Sigmoid colon (tissue), 7 donors: ENCODE measurements at regions of chr19 and their contacts with region 1.

Region 1: DNA sequence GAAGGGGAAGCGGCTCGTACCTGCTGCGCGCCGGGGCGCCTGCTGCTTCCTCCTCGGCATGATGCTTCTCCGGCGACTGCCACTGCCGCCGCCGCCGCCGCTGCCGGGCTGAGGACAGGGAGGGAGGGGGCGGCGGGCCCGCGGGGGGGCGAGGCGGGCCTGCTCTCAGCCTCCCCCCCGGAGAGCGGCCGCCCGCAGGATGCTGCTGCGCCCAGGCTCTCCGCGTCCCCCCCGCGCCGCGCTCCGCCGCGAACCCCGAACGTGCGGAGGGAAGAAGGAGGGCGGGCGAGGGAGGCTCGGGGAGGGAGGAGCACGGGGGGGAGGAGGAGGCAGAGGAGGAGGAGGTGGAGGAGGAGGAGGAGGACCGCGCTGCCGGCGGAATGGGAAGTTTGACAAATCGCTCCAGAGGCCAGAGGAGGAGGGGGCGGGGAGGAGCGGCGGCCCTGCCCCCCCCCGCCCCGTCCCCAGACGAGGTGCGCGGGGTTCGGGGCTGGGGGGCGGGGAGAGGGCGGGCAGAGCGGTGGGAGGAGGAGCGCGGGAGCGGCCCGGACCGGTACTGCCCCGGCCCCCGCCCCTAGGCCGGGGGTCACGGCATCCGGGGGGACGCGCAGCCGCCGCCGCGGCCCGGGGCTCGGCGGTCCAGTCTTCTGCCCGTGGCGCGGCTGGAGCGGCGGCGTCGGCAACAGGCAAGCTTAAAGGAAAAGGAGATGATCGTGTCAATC is at the start of gene TSHZ3:
- DNase-seq: peak; percentile 94
- H3K4me3 ChIP-seq: peak within 1 kb of the TSS; percentile 73 to 98 (median 97)
- H3K27ac ChIP-seq: peak within 1 kb of the TSS; percentile 95 to 99 (median 99)
- H3K4me1 ChIP-seq: peaks cover 0 to 52% (median 50%) of the 10 kb centered on the region in 4 donors
- H3K27me3 ChIP-seq: no peaks in the 10 kb centered on the region
- CTCF ChIP-seq: no peak
- EP300 ChIP-seq: no peak
- POLR2A ChIP-seq: no peak
- total RNA-seq, gene TSHZ3: 16.1 to 27.7 (median 21.2) TPM

Region 2: GRCh38 chr19:31099515-31100205 is 249.7 kb before region 1 on chr19:
- intact Hi-C with region 1: loop called (anchors 10 kb)
- DNase-seq: no peak
- H3K4me3 ChIP-seq: no peak overlapping the region
- H3K27ac ChIP-seq: no peak overlapping the region
- H3K4me1 ChIP-seq: peaks cover 0 to 50% (median 37%) of the 10 kb centered on the region in 4 donors
- H3K27me3 ChIP-seq: no peaks in the 10 kb centered on the region
- CTCF ChIP-seq: no peak
- EP300 ChIP-seq: no peak
- POLR2A ChIP-seq: no peak

Region 3: GRCh38 chr19:31262725-31263191 is 86.6 kb before region 1 on chr19:
- intact Hi-C with region 1: loop called (anchors 5 kb)
- DNase-seq: no peak
- H3K4me3 ChIP-seq: no peak overlapping the region
- H3K27ac ChIP-seq: no peak overlapping the region
- H3K4me1 ChIP-seq: peaks cover 0 to 31% (median 30%) of the 10 kb centered on the region in 4 donors
- H3K27me3 ChIP-seq: no peaks in the 10 kb centered on the region
- CTCF ChIP-seq: no peak
- EP300 ChIP-seq: no peak
- POLR2A ChIP-seq: no peak

Region 4: DNA sequence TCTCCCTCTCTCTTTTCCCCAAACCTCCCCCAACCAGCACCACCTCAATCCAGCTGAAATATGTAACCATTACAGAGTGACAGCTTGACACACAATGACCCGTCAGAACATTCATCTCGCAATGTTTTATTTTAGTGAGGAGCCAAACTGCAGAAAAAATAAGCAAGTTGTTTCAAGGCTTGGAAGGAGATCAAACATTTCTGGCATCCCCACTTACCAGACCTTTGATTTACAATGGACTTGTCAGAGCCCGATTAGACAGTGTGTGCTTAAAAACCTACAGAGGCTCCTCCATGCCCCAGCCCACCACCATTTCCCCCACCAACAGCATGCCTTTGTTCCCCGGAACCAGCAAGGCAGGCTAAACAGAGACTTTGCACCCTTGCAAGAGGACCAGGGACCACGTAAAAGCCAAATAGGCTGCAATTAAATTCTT is 613.3 kb after region 1 on chr19:
- intact Hi-C with region 1: loop called (anchors 10 kb)
- DNase-seq: no peak
- H3K4me3 ChIP-seq: no peak overlapping the region
- H3K27ac ChIP-seq: peak overlapping the region in 3 of 4 donors; percentile 36 to 68 (median 52)
- H3K4me1 ChIP-seq: peaks cover 0 to 54% (median 40%) of the 10 kb centered on the region in 4 donors
- H3K27me3 ChIP-seq: no peaks in the 10 kb centered on the region
- CTCF ChIP-seq: no peak
- EP300 ChIP-seq: no peak
- POLR2A ChIP-seq: no peak

Region 5: GRCh38 chr19:32345261-32346207 is 996.2 kb after region 1 on chr19 and contains the start of gene ZNF507:
- intact Hi-C with region 1: loop called (anchors 10 kb)
- DNase-seq: peak; percentile 90
- H3K4me3 ChIP-seq: peak within 1 kb of the TSS; percentile 78 to 93 (median 89)
- H3K27ac ChIP-seq: peak within 1 kb of the TSS; percentile 79 to 87 (median 84)
- H3K4me1 ChIP-seq: peaks cover 0 to 43% (median 36%) of the 10 kb centered on the region in 4 donors
- H3K27me3 ChIP-seq: no peaks in the 10 kb centered on the region
- CTCF ChIP-seq: peak in 1 of 4 experiments; percentile 3
- EP300 ChIP-seq: no peak
- POLR2A ChIP-seq: peak in 1 of 2 donors; percentile 11
- total RNA-seq, gene ZNF507: 19.3 to 27.1 (median 23.7) TPM

Region 6: DNA sequence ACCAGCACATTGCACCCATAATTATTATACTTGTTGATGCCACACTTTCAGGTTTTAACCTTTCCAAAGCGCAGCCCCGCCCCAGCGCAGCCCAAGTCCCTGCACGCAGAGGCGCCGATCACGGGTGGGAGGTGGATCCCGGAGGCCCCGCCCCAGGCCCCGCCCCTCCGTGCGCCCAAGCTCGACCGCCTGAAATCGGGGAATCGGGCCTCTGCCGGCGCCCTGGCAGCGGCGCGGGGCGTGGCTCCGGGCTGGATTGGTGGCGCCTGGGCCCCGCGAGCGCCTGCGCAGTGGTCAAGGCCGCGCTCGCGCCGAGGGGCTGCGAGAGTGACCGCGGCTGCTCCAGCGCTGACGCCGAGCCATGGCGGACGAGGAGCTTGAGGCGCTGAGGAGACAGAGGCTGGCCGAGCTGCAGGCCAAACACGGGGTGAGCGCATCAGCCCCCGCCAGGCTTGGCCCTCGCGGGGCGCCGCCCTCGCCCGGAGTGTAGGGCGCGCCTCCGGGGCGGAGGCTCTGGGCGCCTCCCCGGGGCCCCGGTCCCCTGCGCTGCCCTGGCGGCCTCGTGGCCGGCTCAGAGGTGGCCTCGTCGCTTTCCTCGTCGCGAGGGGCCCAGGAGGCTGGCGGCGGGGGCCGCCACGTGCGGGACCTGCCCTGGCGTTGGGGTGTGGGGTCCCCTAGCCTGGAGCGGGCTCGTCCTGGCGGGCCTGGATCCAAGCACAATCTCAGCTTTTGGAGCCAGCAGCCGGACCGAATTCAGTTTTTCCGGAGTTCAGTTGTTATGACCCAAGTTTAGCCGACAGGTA is 1231.8 kb after region 1 on chr19 and contains the start of gene PDCD5:
- intact Hi-C with region 1: loop called (anchors 5 kb)
- DNase-seq: peak; percentile 97
- H3K4me3 ChIP-seq: peak within 1 kb of the TSS; percentile 72 to 82 (median 77)
- H3K27ac ChIP-seq: peak within 1 kb of the TSS; percentile 86 to 94 (median 90)
- H3K4me1 ChIP-seq: peaks cover 0 to 16% (median 12%) of the 10 kb centered on the region in 4 donors
- H3K27me3 ChIP-seq: no peaks in the 10 kb centered on the region
- CTCF ChIP-seq: no peak
- EP300 ChIP-seq: no peak
- POLR2A ChIP-seq: peak; percentile 21 to 28
- total RNA-seq, gene PDCD5: 143 to 216 (median 159) TPM